Activated T-helper 1 cell treated with anti-CD3 and anti-CD28 coated beads, Interleukin-12 subunit alpha, Interleukin-12 subunit beta, Interleukin-2, Interleukin-4 antibody, amounts not matched to agents 30 ng/mL and 10 ng/mL and 1 ng/mL, durations not matched to agents 14 hours and 24 hours and 36 hours (primary cell): ENCODE measurements at regions of chr11 and their contacts with region 1.

Region 1: DNA sequence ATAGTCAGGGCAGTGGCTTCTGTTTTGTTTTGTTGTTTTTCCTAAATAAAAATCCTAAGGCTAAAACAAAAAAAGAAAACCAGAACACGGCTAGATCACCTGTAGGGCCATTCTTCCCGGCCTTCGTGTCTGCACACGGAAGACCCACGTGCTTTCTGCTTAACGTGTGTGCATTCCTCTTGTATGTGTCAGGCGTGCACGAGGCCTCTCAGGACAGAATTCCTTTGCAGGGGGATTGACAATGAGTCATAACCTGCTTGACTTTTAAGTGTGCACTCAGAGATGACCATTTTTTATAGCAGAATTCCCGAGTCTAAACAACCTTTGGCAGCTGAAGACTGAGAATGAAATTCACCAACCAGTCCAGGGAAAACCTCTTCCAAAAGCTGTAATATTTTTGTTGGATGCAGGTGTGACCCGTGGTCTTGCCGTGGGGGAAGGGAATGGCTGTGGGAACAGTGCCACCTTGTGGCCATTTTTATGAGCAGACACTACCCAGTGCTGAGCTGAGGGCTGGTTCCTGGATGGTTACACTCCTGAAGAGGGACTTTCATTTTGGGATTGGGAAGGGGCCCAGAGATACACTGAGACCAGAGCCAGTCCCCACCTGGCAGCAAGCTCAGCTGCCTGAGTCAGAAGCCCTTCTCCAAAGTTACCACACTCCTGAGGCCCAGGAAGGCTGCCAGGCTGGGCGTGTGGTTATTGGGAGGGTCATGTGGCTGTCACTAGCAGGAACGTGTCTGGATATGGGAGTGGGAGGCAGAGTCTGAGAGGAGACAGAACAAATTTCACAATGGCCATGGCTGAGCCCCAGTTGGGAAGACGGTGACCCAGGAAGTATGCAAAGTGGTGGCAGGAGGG is 35.8 kb upstream of the DKK3 start:
- DNase-seq: peak; percentile 48
- H3K4me3 Mint-ChIP-seq: no peak overlapping the region
- H3K27ac Mint-ChIP-seq: no peak overlapping the region
- H3K4me1 Mint-ChIP-seq: peaks cover 23% of the 10 kb centered on the region
- H3K27me3 Mint-ChIP-seq: peaks cover 6% of the 10 kb centered on the region

Region 2: DNA sequence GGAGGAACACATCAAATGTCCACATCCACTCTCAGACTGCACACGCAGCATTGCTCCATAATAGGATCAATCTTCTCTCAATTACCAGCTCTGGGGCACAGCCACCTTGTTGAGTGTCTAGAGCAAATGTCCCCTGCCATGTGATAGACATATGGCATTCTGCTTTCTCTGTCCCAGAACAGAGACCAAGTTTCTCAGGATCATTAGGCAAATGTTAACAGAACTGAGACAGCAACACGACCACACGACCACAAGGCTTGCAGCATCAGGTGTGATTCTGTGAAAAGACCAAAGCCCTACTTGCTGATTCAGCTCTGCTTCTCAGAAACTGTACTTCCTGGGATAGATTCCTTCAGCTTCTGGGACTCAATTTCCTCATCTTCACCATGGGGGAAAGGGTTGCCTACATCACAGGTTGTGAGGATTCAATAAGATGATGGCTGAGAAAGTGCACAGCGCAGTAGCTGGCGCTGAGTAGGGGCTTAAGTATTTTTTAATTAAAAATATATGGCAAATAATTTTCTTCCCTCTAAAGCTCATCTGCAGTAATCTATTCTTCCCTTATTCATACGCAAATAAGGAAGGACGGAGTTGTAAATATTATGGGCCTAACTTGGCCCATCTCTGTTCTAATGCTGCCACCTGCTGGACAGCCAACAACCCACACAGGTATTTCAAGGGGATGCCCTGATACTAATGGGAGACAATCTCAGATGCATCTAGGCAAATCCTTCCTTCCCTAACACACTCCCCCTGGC is 256.7 kb before region 1 on chr11:
- intact Hi-C with region 1: loop called (anchors 2 kb)
- DNase-seq: peak; percentile 36
- H3K4me3 Mint-ChIP-seq: no peak overlapping the region
- H3K27ac Mint-ChIP-seq: no peak overlapping the region
- H3K4me1 Mint-ChIP-seq: no peaks in the 10 kb centered on the region
- H3K27me3 Mint-ChIP-seq: peaks cover 20% of the 10 kb centered on the region

Region 3: GRCh38 chr11:12110201-12110713 is 66.1 kb after region 1 on chr11 and contains the start of gene MICAL2:
- intact Hi-C with region 1: loop called (anchors 1 kb)
- DNase-seq: peak; percentile 90
- H3K4me3 Mint-ChIP-seq: peak within 1 kb of the TSS; percentile 90
- H3K27ac Mint-ChIP-seq: peak within 1 kb of the TSS; percentile 99
- H3K4me1 Mint-ChIP-seq: peaks cover 75% of the 10 kb centered on the region
- H3K27me3 Mint-ChIP-seq: no peaks in the 10 kb centered on the region
- total RNA-seq, gene MICAL2: 595 and 619 TPM in 2 replicates

Region 4: DNA sequence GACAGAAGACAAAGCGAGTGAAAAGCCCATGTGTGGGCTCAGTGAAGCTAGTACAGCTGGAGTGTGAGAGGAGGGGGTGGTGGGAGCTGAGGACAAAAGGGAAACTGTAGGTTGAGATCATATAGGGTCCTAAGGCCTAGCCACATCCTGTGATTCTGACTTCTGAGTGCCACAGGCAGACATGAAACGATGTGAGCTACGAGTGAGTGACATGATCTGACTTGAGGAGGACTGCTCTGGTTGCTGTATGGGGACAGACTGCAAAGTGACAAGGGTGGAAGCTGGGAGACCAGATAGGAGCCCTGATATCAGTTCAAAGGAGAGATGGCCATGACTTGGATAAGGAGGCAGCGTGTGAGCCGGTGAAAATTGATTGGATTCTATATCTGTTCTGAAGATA is 151.6 kb after region 1 on chr11:
- intact Hi-C with region 1: loop called (anchors 1 kb)
- DNase-seq: peak; percentile 62
- H3K4me3 Mint-ChIP-seq: peak overlapping the region; percentile 97
- H3K27ac Mint-ChIP-seq: peak overlapping the region; percentile 96
- H3K4me1 Mint-ChIP-seq: peaks cover 69% of the 10 kb centered on the region
- H3K27me3 Mint-ChIP-seq: no peaks in the 10 kb centered on the region

Region 5: DNA sequence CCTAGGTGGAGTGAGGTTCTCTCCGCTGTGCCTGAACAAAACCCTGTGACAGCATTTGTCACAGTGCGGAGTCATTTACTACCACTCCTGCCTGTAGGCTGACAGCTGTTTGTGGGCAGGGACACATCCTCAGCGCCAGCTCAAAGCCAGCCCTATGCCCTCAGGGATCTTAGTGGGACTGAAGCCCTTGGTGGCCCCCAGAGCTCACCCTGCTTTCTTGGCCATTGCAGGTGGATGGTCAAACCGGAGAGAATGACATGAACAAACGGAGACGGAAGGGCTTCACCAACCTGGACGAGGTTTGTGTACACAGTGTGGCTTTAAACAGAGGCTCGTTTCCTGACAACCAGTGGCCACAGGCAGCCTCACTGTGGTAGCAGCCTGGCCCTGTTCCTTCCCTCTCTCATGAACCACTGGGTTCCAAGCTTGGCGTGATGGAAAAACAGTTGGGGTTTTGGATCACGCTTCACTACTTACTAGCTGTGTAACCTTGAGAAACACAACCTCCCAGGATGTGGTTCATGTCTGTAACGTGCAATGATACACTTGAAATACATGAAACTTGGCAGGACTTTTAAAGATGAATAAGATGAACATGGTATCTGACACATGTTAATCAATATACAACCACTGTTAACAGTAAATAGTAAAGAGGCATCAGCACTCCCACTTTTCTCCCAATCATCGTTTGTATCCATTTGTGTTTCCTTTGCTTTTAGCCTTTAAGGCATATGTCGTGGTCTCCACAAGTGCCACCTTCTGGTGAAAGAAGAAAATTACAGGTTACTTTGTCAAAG is 192.0 kb after region 1 on chr11:
- intact Hi-C with region 1: loop called (anchors 1 kb)
- DNase-seq: peak; percentile 67
- H3K4me3 Mint-ChIP-seq: peak overlapping the region; percentile 77
- H3K27ac Mint-ChIP-seq: peak overlapping the region; percentile 96
- H3K4me1 Mint-ChIP-seq: peaks cover 65% of the 10 kb centered on the region
- H3K27me3 Mint-ChIP-seq: no peaks in the 10 kb centered on the region

Region 6: DNA sequence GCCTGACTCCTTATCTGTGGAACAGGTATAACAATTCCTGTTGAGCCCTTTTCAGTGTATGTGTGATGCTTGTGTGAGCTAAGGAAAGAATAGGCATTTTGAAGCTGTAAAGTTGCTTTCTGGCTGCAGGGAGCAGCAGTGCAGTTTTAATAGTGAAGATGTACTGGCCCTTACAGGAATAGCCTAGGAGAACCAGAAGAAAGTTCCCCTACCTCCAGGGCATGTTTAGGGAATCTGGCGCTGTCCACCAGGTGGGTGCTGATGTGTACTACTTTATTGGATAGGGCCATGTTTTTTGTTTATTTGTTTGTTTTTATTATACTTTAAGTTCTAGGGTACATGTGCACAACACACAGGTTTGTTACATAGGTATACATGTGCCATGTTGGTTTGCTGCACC is 1244.9 kb after region 1 on chr11:
- intact Hi-C with region 1: no loop called
- DNase-seq: no peak
- H3K4me3 Mint-ChIP-seq: no peak overlapping the region
- H3K27ac Mint-ChIP-seq: peak overlapping the region; percentile 84
- H3K4me1 Mint-ChIP-seq: peaks cover 84% of the 10 kb centered on the region
- H3K27me3 Mint-ChIP-seq: no peaks in the 10 kb centered on the region